Activated T-helper 2 cell treated with anti-CD3 and anti-CD28 coated beads, Interferon-gamma antibody, Interleukin-2, Interleukin-4, amounts not matched to agents 10 μg/mL and 5 μg/mL and 100 μg/mL, durations not matched to agents 14 hours and 24 hours and 36 hours (primary cell): ENCODE measurements at regions of chr7 and their contacts with region 1.

Region 1: DNA sequence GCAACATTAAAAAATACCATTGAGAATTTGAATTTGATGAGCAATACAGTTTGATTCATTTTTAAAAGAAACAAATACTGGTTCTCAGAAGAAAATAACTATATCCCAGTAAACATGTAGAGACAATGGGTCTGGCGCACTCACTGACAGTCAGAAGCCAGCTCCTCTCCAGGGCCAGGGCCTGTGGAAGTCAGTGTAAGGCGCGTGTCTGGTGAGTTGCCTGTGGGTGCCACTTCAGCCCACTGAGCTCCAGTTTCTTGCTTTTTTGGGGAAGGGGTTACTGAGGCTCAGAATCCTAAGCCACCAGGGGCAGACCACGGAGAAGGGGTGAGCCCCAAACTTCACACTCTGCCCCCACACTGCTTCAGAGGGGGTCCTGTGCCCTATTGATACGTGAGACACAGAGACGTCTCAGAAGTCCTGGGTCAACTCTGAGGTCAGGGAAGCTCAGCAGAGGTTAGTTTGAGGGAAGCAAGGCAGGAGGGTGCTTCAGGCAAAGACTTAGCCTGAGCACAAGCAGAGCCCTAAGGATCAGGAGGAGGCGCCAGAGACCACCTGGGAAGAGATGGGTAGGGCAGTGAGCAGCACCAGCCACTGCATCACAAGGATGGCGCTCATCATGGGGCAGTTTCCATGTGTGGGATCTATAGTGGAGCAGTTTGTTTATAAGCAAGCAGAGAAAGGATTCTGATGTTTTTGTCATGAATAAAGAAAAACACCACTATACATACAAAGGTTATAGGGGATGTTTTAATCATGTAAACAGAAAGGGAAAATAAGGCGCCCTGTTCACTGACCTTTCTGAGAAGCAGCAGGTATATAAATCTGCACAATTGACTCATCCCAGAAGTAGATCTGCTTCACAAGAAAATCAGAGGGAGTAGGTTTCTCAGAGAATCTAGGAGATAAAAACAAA is 95.7 kb downstream of the PKD1L1 start:
- DNase-seq: no peak
- H3K4me3 Mint-ChIP-seq: no peak overlapping the region
- H3K27ac Mint-ChIP-seq: no peak overlapping the region
- H3K4me1 Mint-ChIP-seq: peaks cover 3% of the 10 kb centered on the region
- H3K27me3 Mint-ChIP-seq: no peaks in the 10 kb centered on the region

Region 2: GRCh38 chr7:47738563-47739166 is 113.9 kb before region 1 on chr7:
- intact Hi-C with region 1: no loop called
- DNase-seq: no peak
- H3K4me3 Mint-ChIP-seq: no peak overlapping the region
- H3K27ac Mint-ChIP-seq: no peak overlapping the region
- H3K4me1 Mint-ChIP-seq: no peaks in the 10 kb centered on the region
- H3K27me3 Mint-ChIP-seq: no peaks in the 10 kb centered on the region

Region 3: GRCh38 chr7:48025630-48026029 is 173.0 kb after region 1 on chr7:
- intact Hi-C with region 1: no loop called
- DNase-seq: no peak
- H3K4me3 Mint-ChIP-seq: no peak overlapping the region
- H3K27ac Mint-ChIP-seq: no peak overlapping the region
- H3K4me1 Mint-ChIP-seq: no peaks in the 10 kb centered on the region
- H3K27me3 Mint-ChIP-seq: peaks cover 57% of the 10 kb centered on the region

Region 4: DNA sequence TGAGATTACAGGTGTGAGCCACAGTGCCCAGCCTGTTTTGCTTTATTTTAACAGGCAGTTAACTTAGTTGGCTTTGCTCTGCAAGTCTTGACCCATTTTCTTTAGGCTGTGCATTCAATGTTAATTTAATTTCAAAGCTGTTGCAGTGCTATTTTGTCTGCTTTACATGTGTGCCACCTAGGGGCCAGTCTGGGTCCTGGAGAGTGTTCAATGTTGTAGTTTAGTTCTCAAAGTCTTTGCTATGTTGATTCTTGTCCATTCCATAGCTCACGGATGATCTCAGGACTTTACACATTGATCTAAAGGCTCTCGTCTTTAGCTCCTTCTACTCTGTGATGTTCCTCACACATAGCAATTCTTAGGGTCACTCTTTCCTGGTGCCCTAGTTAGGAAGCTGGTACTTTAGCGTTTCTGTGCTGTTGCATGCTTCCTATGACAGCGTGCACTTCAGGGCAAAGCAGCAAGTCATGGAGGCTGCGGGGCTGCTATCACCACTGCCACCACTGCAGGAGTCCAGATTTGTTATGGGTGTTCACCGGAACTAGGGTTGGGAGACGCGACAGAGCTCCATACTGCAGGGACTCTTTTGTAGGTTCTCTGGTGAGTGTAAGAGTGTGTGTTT is 302.3 kb after region 1 on chr7:
- intact Hi-C with region 1: loop called (anchors 10 kb)
- DNase-seq: peak; percentile 18
- H3K4me3 Mint-ChIP-seq: no peak overlapping the region
- H3K27ac Mint-ChIP-seq: no peak overlapping the region
- H3K4me1 Mint-ChIP-seq: no peaks in the 10 kb centered on the region
- H3K27me3 Mint-ChIP-seq: peaks cover 35% of the 10 kb centered on the region